Activated CD4-positive, alpha-beta T cell treated with anti-CD3 and anti-CD28 coated beads, Interleukin-2, amount 10 ng/mL, durations not matched to agents 24 days and 14 days (primary cell): ENCODE measurements at regions of chr4 and their contacts with region 1.

Region 1: DNA sequence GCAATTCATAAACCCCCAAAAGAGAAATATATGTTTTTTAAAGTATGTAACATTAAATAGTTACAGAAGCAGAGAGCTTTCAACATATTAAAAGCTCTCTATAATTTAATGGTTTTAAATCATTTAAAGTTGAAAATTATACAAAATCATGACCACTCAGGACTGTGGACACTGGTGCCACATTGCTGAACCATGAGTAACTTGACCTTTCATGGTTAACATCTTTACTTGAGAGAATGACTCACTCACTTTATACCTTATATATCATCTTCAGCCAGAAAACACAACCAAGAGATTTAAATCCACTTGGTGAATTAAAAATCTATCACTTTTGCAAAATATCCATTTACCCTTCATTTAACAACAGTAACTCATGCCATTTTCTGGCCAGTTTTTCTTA is 584.3 kb upstream of the SMIM31 start:
- DNase-seq: no peak
- H3K4me3 Mint-ChIP-seq: no peak overlapping the region
- H3K27ac Mint-ChIP-seq: no peak overlapping the region
- H3K4me1 Mint-ChIP-seq: no peaks in the 10 kb centered on the region
- H3K27me3 Mint-ChIP-seq: no peaks in the 10 kb centered on the region

Region 2: GRCh38 chr4:163878336-163879121 is 291.1 kb before region 1 on chr4:
- intact Hi-C with region 1: loop called (anchors 10 kb)
- DNase-seq: no peak
- H3K4me3 Mint-ChIP-seq: no peak overlapping the region
- H3K27ac Mint-ChIP-seq: no peak overlapping the region
- H3K4me1 Mint-ChIP-seq: no peaks in the 10 kb centered on the region
- H3K27me3 Mint-ChIP-seq: no peaks in the 10 kb centered on the region